Heart right ventricle (tissue), 16 donors: ENCODE measurements at regions of chr18 and their contacts with region 1.

Region 1: DNA sequence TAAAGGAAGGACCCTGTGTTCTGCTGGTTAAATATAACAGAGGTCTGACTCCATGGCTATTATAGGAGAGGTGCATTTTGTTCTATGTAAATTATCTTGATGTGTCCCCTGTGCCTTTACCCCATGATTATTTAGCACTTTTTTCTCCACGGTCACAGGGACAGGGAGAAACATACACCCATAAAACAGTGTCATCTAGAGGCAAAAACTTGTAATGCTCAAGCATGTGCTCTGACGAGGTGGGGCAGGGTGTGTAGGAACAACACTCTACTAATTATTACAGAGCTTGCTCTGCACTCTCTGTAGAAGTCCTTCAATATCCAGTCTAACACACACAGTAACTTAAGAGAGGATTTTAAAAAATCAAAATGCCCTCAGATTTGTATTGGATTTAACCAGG is 187.9 kb downstream of the NEDD4L start:
- DNase-seq: no peak
- ATAC-seq: peak in 7 of 8 donors; percentile 67 to 87 (median 74)
- H3K4me3 ChIP-seq: no peak overlapping the region
- H3K27ac ChIP-seq: no peak overlapping the region
- H3K4me1 ChIP-seq: no peaks in the 10 kb centered on the region
- H3K27me3 ChIP-seq: no peaks in the 10 kb centered on the region
- CTCF ChIP-seq: peak in 7 of 9 donors; percentile 30 to 61 (median 54)

Region 2: GRCh38 chr18:58054041-58054781 is 177.7 kb before region 1 on chr18:
- intact Hi-C with region 1: no loop called
- DNase-seq: no peak
- ATAC-seq: no peak
- H3K4me3 ChIP-seq: no peak overlapping the region
- H3K27ac ChIP-seq: no peak overlapping the region
- H3K4me1 ChIP-seq: peaks cover 0 to 6% (median 0%) of the 10 kb centered on the region in 9 donors
- H3K27me3 ChIP-seq: no peaks in the 10 kb centered on the region
- CTCF ChIP-seq: no peak

Region 3: GRCh38 chr18:58135701-58136331 is 96.1 kb before region 1 on chr18:
- intact Hi-C with region 1: loop called in 1 of 10 experiments (anchors 10 kb)
- DNase-seq: peak in 1 of 2 donors; percentile 42
- ATAC-seq: peak; percentile 47 to 83 (median 64)
- H3K4me3 ChIP-seq: no peak overlapping the region
- H3K27ac ChIP-seq: no peak overlapping the region
- H3K4me1 ChIP-seq: peaks cover 0 to 8% (median 0%) of the 10 kb centered on the region in 9 donors
- H3K27me3 ChIP-seq: no peaks in the 10 kb centered on the region
- CTCF ChIP-seq: peak; percentile 57 to 87 (median 78)